Heart right ventricle (tissue), 16 donors: ENCODE measurements at regions of chr7 and their contacts with region 1.

Region 1: DNA sequence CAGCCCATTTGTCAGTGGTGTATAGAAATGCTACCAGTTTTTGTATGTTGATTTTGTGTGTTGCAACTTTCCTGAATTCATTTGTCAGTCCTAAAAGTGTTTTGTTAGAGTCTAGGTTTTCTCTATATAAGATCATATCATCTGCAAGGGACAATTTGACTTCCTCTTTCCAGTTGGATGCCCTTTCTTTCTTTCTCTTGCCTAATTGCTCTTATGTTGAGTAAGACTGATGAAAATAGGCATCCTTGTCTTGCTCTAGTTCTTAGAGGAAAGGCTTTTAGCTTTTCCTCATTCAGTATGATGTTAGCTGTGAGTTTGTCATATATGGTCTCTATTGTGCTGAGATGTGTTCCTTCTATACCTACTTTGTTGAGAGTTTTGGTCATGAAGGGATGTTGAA is 161.7 kb upstream of the TPK1 start:
- DNase-seq: no peak
- ATAC-seq: no peak
- H3K4me3 ChIP-seq: no peak overlapping the region
- H3K27ac ChIP-seq: no peak overlapping the region
- H3K4me1 ChIP-seq: no peaks in the 10 kb centered on the region
- H3K27me3 ChIP-seq: no peaks in the 10 kb centered on the region
- CTCF ChIP-seq: no peak

Region 2: DNA sequence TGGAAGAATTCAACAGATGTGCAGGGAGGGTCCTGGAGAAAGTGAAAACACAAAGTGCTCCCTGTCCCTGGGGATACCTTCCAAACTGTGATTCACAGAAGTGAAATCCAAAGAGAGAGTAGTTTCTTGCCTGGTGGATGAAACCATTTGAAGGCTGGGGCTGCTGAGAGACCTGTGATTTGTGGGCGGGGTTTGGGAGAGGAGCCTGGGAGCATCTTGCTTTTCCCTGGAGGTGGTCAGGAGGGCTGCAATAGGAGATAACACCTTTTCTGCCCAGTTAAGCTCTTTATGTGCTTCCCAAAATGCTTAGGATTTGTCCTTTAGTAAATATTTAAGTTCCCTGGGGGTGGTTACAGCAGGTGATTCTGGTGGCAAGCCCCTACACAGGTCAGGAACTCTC is 56.4 kb before region 1 on chr7:
- intact Hi-C with region 1: no loop called
- DNase-seq: no peak
- ATAC-seq: no peak
- H3K4me3 ChIP-seq: no peak overlapping the region
- H3K27ac ChIP-seq: no peak overlapping the region
- H3K4me1 ChIP-seq: no peaks in the 10 kb centered on the region
- H3K27me3 ChIP-seq: no peaks in the 10 kb centered on the region
- CTCF ChIP-seq: no peak

Region 3: DNA sequence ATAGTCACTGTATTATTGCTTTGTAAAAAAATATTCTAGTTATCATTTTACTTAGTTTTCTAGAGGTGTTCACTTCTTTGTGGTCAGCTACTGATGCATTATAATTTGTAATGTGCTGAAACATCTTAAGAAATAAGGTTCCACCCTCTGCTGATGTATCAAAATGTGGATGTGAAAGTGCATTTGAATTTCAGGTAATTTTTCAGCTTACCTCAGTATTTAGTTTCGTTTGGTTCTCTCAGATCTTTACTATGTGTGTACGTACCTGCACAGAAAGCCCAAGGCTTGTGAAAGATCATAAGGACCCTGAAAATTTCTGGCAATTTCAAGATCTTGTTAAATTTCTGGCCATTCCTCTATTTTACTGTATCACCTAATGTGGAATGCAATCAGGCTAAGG is 380.7 kb after region 1 on chr7:
- intact Hi-C with region 1: loop called in 1 of 10 experiments (anchors 10 kb)
- DNase-seq: no peak
- ATAC-seq: no peak
- H3K4me3 ChIP-seq: no peak overlapping the region
- H3K27ac ChIP-seq: no peak overlapping the region
- H3K4me1 ChIP-seq: no peaks in the 10 kb centered on the region
- H3K27me3 ChIP-seq: no peaks in the 10 kb centered on the region
- CTCF ChIP-seq: no peak